Natural killer cell (primary cell): ENCODE measurements at regions of chr12 and their contacts with region 1.

Region 1: DNA sequence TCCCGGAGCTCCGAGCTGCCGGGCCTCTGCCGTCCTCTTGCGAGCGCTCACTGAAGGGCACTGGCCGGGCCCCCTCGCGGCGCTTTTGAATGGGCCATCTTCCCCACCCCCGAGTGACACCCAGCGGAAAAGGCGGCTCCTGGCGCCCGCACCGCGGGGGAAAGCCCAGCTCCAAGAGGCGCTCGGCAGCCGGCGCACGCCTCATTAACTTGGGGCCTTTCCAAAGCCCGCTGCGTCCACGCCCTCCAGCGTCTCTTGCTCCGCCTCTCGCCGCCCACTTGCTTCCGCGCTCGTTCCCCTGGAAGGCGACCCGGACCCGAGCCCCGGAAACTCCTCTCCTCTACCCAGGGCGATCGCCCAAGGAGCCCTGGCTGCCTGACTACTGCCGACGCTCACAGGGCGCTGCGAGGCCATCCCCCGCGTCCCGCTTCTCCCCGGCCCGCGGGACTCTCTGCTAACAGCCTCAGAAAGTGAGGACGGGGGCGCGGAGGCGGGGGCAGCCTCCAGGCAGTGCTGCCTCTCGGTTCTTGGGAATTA is at the start of gene PHLDA1:
- DNase-seq: peak; percentile 93 to 95
- ATAC-seq: peak; percentile 85 to 93 (median 85)
- H3K4me3 ChIP-seq: peak within 1 kb of the TSS; percentile 69
- H3K4me3 Mint-ChIP-seq: peak within 1 kb of the TSS; percentile 93
- H3K27ac ChIP-seq: peak within 1 kb of the TSS; percentile 89
- H3K27ac Mint-ChIP-seq: peak within 1 kb of the TSS; percentile 95 to 98
- H3K4me1 ChIP-seq: peaks cover 25% of the 10 kb centered on the region
- H3K4me1 Mint-ChIP-seq: peaks cover 35 to 36% of the 10 kb centered on the region in 2 donors
- H3K27me3 ChIP-seq: peaks cover 2% of the 10 kb centered on the region
- H3K27me3 Mint-ChIP-seq: no peaks in the 10 kb centered on the region
- CTCF ChIP-seq: peak; percentile 40
- total RNA-seq, gene PHLDA1: 11.1 to 24.0 (median 19.1) TPM

Region 2: DNA sequence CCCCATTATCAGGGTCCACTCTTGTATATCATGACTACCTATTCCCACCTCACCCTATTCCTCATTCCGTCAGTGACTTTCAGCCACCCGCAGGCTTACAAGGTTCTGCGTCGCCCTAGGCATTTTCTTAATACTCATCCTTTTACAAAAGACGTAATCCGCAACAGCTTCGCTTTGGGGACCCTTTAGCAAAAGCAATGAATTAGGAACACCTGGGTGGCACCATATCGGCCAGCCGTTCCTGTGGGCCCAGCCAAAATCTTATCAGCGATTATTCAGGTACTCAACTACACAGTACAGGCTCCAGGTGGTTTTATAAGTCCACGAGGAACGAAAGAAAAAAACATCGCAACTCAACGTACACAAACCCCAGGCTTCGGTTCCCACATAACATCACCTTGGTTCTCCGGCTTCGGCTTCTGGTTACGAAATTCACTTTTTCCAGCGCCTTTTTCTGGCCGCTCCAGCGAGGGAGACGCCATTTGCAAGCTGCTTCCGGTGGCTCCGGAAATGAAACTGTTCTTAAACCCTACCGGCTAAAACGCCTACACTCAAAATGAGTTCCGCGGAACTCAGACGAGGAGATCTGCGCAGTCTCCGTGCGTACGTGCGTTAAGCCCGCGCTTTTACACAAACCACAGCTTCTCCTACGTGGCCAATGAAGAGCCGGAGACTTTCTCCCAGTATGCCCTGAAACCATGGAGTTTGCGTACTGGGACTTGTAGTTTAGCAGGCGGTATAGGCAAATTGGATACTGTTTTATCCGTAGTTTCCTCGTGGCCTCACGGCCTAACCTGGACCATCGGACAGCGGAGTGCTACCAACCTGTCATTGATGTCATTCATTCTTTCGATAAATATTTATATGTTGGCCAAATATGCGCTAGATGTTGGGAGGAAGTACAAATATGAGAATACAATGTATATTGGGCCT is 520.2 kb before region 1 on chr12 and contains the start of gene KRR1:
- intact Hi-C with region 1: loop called (anchors 5 kb)
- DNase-seq: peak; percentile 75 to 98
- ATAC-seq: peak; percentile 96 to 97 (median 96)
- H3K4me3 ChIP-seq: peak within 1 kb of the TSS; percentile 81
- H3K4me3 Mint-ChIP-seq: peak within 1 kb of the TSS; percentile 99
- H3K27ac ChIP-seq: peak within 1 kb of the TSS; percentile 80
- H3K27ac Mint-ChIP-seq: peak within 1 kb of the TSS; percentile 98
- H3K4me1 ChIP-seq: peaks cover 4% of the 10 kb centered on the region
- H3K4me1 Mint-ChIP-seq: peaks cover 22 to 30% of the 10 kb centered on the region in 2 donors
- H3K27me3 ChIP-seq: peaks cover 2% of the 10 kb centered on the region
- H3K27me3 Mint-ChIP-seq: no peaks in the 10 kb centered on the region
- CTCF ChIP-seq: no peak
- total RNA-seq, gene KRR1: 101 to 112 (median 106) TPM

Region 3: GRCh38 chr12:75560167-75560566 is 471.4 kb before region 1 on chr12:
- intact Hi-C with region 1: no loop called
- DNase-seq: no peak
- ATAC-seq: no peak
- H3K4me3 ChIP-seq: no peak overlapping the region
- H3K4me3 Mint-ChIP-seq: no peak overlapping the region
- H3K27ac ChIP-seq: no peak overlapping the region
- H3K27ac Mint-ChIP-seq: no peak overlapping the region
- H3K4me1 ChIP-seq: no peaks in the 10 kb centered on the region
- H3K4me1 Mint-ChIP-seq: no peaks in the 10 kb centered on the region
- H3K27me3 ChIP-seq: no peaks in the 10 kb centered on the region
- H3K27me3 Mint-ChIP-seq: peaks cover 15 to 35% of the 10 kb centered on the region in 2 donors
- CTCF ChIP-seq: no peak

Region 4: GRCh38 chr12:75933101-75933500 is 98.5 kb before region 1 on chr12:
- intact Hi-C with region 1: loop called (anchors 1 kb)
- DNase-seq: no peak
- ATAC-seq: no peak
- H3K4me3 ChIP-seq: no peak overlapping the region
- H3K4me3 Mint-ChIP-seq: no peak overlapping the region
- H3K27ac ChIP-seq: no peak overlapping the region
- H3K27ac Mint-ChIP-seq: no peak overlapping the region
- H3K4me1 ChIP-seq: peaks cover 10% of the 10 kb centered on the region
- H3K4me1 Mint-ChIP-seq: peaks cover 5 to 7% of the 10 kb centered on the region in 2 donors
- H3K27me3 ChIP-seq: peaks cover 2% of the 10 kb centered on the region
- H3K27me3 Mint-ChIP-seq: peaks cover 0 to 6% of the 10 kb centered on the region in 2 donors
- CTCF ChIP-seq: no peak

Region 5: GRCh38 chr12:75977952-75978671 is 53.5 kb before region 1 on chr12:
- intact Hi-C with region 1: loop called (anchors 1 kb)
- DNase-seq: peak; percentile 63 to 91
- ATAC-seq: peak; percentile 88 to 98 (median 97)
- H3K4me3 ChIP-seq: no peak overlapping the region
- H3K4me3 Mint-ChIP-seq: peak overlapping the region; percentile 17
- H3K27ac ChIP-seq: peak overlapping the region; percentile 93
- H3K27ac Mint-ChIP-seq: peak overlapping the region; percentile 88 to 94
- H3K4me1 ChIP-seq: peaks cover 24% of the 10 kb centered on the region
- H3K4me1 Mint-ChIP-seq: peaks cover 22 to 31% of the 10 kb centered on the region in 2 donors
- H3K27me3 ChIP-seq: no peaks in the 10 kb centered on the region
- H3K27me3 Mint-ChIP-seq: no peaks in the 10 kb centered on the region
- CTCF ChIP-seq: no peak

Region 6: DNA sequence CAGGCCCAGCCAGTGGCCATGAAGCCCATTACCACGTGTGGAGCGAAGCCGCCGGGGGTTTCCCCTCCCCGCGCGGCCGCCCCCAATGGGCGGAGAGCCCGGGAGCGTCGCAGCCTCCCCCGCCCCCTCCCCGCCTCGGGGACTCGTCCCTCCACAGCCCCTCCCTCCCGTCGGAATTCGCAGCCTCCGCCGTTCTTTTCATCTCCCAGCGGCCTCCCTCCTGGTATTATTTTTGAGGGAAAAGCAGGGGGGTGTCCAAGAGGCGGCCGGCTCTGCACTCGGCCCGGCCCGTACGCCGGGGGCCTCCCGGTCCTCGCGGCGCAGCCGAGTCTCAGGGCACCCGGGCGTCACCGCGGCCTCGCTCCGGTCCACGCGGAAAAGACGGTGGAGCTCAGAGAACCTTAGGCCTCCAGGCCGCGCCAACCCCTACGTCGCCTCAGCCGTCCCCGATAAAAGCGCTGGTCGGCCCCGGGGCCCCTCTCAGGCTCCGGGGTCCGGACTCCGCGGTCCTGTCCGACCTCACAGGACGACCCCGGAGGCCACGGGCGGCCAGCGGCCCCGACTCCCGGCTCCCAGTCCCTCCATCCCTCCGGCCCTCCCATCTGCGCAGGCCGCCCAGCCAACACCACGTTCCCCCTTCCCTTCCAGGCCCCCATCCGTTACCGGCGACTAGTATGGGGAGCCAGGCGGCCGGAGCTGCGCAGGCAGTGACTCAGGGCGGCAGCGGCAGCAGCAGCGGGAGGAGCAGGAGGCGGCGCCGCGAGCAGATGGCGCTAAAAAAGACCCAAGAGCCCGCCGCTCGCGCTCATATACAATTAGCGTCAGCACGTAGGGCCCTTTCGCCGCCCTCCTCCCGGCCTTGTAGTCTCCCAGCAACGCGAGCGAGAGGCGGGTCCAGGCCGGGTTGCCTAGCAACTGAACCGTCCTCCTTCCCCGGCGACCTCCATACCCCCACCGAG is 52.6 kb after region 1 on chr12 and contains the start of gene NAP1L1:
- intact Hi-C with region 1: loop called (anchors 1 kb)
- DNase-seq: peak; percentile 94 to 98
- ATAC-seq: peak; percentile 78 to 92 (median 82)
- H3K4me3 ChIP-seq: peak within 1 kb of the TSS; percentile 82
- H3K4me3 Mint-ChIP-seq: peak within 1 kb of the TSS; percentile 98
- H3K27ac ChIP-seq: peak within 1 kb of the TSS; percentile 99
- H3K27ac Mint-ChIP-seq: peak within 1 kb of the TSS; percentile 96 to 99
- H3K4me1 ChIP-seq: peaks cover 11% of the 10 kb centered on the region
- H3K4me1 Mint-ChIP-seq: peaks cover 43 to 49% of the 10 kb centered on the region in 2 donors
- H3K27me3 ChIP-seq: no peaks in the 10 kb centered on the region
- H3K27me3 Mint-ChIP-seq: no peaks in the 10 kb centered on the region
- CTCF ChIP-seq: no peak
- total RNA-seq, gene NAP1L1: 264 to 431 (median 286) TPM